ENCODE measurements at regions of chr9 and their contacts with region 1.

Region 1: GRCh38 chr9:38707885-38708637 is 11.9 kb downstream of the FAM240B start:
- DNase-seq: peak; percentile 48
- CTCF ChIP-seq: peak; percentile 26

Region 2: GRCh38 chr9:38107811-38108304 is 600.2 kb before region 1 on chr9:
- in situ Hi-C with region 1: no loop called
- DNase-seq: no peak
- CTCF ChIP-seq: no peak

Region 3: DNA sequence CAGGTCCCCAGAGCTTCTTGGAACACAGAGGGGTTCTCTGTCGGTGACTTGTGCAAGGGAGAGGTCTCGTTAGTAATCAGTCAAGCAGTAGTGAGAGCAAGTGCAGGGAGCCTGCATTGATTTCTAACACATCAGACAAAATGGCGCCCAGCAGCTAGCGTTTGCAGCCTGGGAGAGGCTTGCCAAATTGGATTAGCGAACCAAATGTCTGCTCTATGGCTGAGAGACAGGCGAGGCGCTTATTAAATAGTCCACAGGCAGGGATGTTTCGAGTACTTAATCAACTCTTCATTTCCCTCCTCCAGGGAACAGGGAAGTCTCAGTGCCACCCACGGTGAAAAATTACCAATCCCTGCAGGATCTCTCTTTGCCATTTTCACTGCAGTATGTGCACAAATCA is 507.6 kb before region 1 on chr9:
- in situ Hi-C with region 1: no loop called
- DNase-seq: no peak
- CTCF ChIP-seq: no peak

Region 4: DNA sequence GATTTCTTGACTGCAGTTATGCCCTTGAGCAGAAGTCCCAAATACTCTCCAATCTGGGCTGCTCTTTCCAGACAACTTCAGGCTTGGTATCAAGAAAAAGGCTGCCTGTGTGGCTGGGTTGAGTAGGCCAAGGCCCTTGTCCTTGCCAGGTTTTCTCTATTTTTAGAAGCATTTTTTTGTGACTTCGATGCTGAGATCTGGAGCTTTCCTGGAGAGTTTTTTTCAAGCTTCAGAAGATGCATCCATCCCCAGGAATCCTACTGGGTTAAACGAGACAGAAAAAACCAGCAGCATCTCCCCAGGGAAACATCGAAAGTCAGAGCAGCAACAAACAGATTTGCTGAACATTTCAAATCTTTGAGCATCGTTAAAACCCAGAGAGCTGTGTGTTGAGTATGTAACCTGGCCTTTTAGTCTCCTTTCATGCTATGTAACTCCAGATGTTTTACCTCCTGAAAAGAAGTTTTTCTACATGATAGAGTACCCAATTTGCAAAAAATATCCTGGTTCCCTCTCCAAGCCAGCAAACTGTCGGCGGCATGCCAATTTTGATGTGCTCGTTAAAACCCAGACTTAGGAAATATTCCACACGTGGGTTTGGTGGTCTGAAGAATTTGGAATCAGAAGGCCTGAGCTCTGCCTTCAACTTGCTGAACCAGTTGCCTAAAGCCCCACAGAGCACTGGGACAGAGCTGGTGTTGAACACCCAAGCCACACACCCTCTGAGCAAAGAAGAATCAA is 413.7 kb before region 1 on chr9:
- in situ Hi-C with region 1: no loop called
- DNase-seq: no peak
- CTCF ChIP-seq: no peak

Region 5: GRCh38 chr9:38641985-38642864 is 65.8 kb before region 1 on chr9:
- in situ Hi-C with region 1: loop called (anchors 10 kb)
- DNase-seq: peak; percentile 54
- CTCF ChIP-seq: peak; percentile 33

Measured in GM13976 (cell line).